ENCODE measurements at regions of chr6 and their contacts with region 1.

Region 1: DNA sequence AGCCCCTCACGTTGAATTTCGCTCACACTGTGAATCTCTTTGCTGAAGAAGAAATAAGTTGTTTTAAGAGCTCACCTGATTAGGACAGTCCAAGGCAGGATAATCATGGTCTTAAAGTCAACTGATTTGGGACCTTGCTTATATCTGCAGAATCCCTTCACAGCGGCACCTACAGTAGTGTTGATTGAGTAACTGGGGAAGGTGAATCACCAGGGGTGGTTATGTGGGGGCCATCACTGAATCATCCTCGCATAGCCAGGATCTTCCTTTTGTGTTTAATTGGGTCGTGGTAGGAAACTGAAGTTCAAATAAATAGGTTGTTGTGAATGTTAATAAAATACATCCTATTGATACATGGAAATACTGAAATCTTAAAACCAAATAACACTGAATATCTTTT is 20.2 kb upstream of the MICA start:
- DNase-seq: peak; percentile 42
- ATAC-seq: peak; percentile 92
- H3K4me3 Mint-ChIP-seq: no peak overlapping the region
- H3K27ac Mint-ChIP-seq: no peak overlapping the region
- H3K4me1 Mint-ChIP-seq: peaks cover 3% of the 10 kb centered on the region
- H3K27me3 Mint-ChIP-seq: peaks cover 14% of the 10 kb centered on the region

Region 2: DNA sequence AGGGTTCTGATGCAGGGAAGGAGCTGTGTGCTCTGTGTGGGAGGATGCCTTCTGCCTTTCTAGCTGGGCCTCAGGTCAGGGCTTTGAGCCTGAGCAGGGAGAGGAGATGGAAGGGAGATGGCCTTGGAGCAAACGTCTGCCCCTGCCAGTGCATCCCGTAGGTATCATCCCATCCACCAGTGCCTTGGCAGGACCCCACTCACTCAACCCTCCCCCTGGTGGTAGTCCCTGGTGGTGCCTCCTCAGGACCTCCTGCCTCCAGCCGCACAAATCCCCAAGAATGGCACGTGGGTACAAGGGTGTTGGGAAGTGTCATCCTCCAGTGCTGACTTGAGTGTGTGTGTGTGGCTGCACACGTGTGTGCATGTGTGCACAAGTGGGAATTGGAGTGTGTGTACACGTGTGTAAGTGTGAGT is 91.7 kb after region 1 on chr6:
- CTCF ChIA-PET with region 1: no interaction called
- POLR2A ChIA-PET with region 1: no interaction called
- intact Hi-C with region 1: no loop called
- DNase-seq: peak; percentile 56
- ATAC-seq: peak; percentile 29
- H3K4me3 Mint-ChIP-seq: no peak overlapping the region
- H3K27ac Mint-ChIP-seq: no peak overlapping the region
- H3K4me1 Mint-ChIP-seq: peaks cover 49% of the 10 kb centered on the region
- H3K27me3 Mint-ChIP-seq: no peaks in the 10 kb centered on the region

Region 3: GRCh38 chr6:31485055-31485454 is 101.9 kb after region 1 on chr6:
- CTCF ChIA-PET with region 1: no interaction called
- POLR2A ChIA-PET with region 1: no interaction called
- intact Hi-C with region 1: loop called (anchors 1 kb)
- DNase-seq: no peak
- ATAC-seq: no peak
- H3K4me3 Mint-ChIP-seq: no peak overlapping the region
- H3K27ac Mint-ChIP-seq: no peak overlapping the region
- H3K4me1 Mint-ChIP-seq: peaks cover 1% of the 10 kb centered on the region
- H3K27me3 Mint-ChIP-seq: no peaks in the 10 kb centered on the region

Region 4: GRCh38 chr6:31497531-31498476 is 114.7 kb after region 1 on chr6 and contains the start of gene MICB:
- CTCF ChIA-PET with region 1: no interaction called
- POLR2A ChIA-PET with region 1: no interaction called
- intact Hi-C with region 1: no loop called
- DNase-seq: peak; percentile 91
- ATAC-seq: peak; percentile 75
- H3K4me3 Mint-ChIP-seq: peak within 1 kb of the TSS; percentile 79
- H3K27ac Mint-ChIP-seq: peak within 1 kb of the TSS; percentile 87
- H3K4me1 Mint-ChIP-seq: peaks cover 63% of the 10 kb centered on the region
- H3K27me3 Mint-ChIP-seq: no peaks in the 10 kb centered on the region
- total RNA-seq, gene MICB: 19.6 to 19.7 TPM

Measured in activated CD4-positive, alpha-beta T cell treated with anti-CD3 and anti-CD28 coated beads for 36 hours (primary cell).